Activated CD8-positive, alpha-beta T cell treated with anti-CD3 and anti-CD28 coated beads, Interleukin-2, amount 10 ng/mL, durations not matched to agents 7 days and 5 days (primary cell): ENCODE measurements at regions of chr10 and their contacts with region 1.

Region 1: DNA sequence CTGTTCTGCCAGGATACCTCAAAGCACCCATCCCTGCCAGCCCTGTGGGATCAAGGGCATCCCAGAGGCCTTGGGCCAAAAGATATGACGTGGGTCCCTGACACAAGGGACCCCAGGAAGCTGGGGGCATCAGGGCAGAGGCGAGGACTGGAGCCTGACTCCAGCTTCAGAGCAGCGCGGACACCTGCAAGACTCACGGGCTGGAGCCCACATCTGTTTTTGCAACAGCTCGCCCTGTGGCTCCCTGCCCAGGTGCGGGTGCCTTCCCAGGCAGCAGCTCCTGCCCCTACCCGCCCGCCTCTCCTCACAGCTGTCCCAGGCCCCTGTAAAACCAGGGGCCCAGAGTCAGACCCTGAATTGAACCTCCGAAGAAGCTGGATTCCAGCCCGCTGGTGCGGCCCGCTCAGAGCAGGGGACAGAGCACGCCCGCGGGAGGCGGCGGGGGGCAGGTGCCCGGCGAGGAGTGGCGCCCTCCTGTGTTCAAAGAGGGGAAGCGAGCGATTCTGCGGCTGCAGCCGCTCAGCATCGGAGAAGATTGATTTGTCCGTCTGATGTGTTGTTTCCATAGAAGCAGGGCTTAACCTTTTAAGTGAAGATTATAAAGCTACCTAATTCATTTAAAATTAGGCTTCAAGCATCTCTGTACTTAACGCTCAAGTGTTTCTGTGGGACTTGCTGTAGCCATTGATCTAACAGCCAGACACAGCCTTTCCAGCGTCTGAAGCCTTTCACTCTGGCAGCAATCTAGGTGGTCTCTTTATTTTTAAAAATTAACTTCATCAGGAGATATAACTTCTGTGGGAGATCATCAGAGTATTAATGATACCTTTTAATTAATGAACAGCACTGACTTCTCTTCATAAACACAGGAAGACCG is 88.4 kb downstream of the BEND7 start:
- DNase-seq: peak; percentile 70
- ATAC-seq: peak; percentile 95
- H3K4me3 Mint-ChIP-seq: peak overlapping the region; percentile 20
- H3K27ac Mint-ChIP-seq: no peak overlapping the region
- H3K4me1 Mint-ChIP-seq: peaks cover 9% of the 10 kb centered on the region
- H3K27me3 Mint-ChIP-seq: peaks cover 35% of the 10 kb centered on the region

Region 2: DNA sequence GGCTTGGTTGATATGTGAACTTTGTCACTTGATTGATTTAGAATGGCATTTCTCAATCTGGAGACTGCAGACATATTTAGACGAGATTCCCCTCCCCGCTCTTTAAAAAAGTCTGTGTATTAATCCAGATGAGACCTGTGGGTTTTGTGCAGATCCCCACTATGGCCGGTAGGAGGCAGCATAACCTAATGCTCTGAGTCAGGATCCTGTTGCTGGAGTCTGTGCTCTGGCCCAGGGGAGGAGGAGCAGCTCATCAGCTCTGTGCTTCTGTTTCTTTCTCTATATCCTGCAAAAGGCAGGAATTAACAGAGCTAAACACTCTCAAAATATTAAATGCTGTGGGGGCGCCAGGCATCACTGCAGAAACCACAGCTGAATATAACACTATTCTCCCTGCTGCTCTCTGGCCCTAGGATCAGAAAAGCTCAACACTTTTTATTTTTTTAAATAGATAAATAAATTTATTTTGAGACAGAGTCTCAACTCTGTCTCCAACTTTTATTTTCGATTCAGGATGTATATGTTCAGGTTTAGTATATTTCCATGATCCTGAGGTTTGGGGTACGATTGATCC is 68.4 kb before region 1 on chr10:
- CTCF ChIA-PET with region 1: interaction called, 66 read pairs
- POLR2A ChIA-PET with region 1: no interaction called
- DNase-seq: peak; percentile 79
- ATAC-seq: peak; percentile 98
- H3K4me3 Mint-ChIP-seq: no peak overlapping the region
- H3K27ac Mint-ChIP-seq: no peak overlapping the region
- H3K4me1 Mint-ChIP-seq: peaks cover 2% of the 10 kb centered on the region
- H3K27me3 Mint-ChIP-seq: peaks cover 6% of the 10 kb centered on the region

Region 3: GRCh38 chr10:13404305-13404759 is 36.1 kb before region 1 on chr10:
- CTCF ChIA-PET with region 1: no interaction called
- POLR2A ChIA-PET with region 1: no interaction called
- DNase-seq: no peak
- ATAC-seq: no peak
- H3K4me3 Mint-ChIP-seq: no peak overlapping the region
- H3K27ac Mint-ChIP-seq: no peak overlapping the region
- H3K4me1 Mint-ChIP-seq: no peaks in the 10 kb centered on the region
- H3K27me3 Mint-ChIP-seq: peaks cover 4% of the 10 kb centered on the region

Region 4: GRCh38 chr10:13422566-13423199 is 17.7 kb before region 1 on chr10:
- CTCF ChIA-PET with region 1: interaction called, 12 read pairs
- POLR2A ChIA-PET with region 1: interaction called, 3 read pairs
- DNase-seq: no peak
- ATAC-seq: no peak
- H3K4me3 Mint-ChIP-seq: no peak overlapping the region
- H3K27ac Mint-ChIP-seq: no peak overlapping the region
- H3K4me1 Mint-ChIP-seq: no peaks in the 10 kb centered on the region
- H3K27me3 Mint-ChIP-seq: peaks cover 14% of the 10 kb centered on the region

Region 5: DNA sequence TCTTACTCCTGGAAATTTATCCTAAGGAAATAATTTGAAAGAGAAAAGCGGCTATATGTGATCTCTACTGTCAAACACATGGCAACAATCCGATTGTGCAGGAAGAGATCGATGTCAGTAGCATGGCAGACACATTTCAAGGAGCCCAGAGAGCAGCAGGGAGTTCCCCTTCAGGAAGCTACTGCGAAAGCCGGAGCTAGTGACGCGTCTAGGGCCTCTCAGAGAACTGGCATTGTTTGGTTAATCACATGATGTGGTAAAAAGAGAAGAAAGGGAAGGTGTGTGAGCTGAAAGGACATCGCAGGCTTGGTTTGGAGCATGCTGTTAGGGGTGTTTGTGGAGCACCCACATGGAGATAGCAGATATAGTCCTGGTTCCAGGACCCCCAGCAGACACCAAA is 13.5 kb after region 1 on chr10:
- CTCF ChIA-PET with region 1: interaction called, 18 read pairs
- POLR2A ChIA-PET with region 1: no interaction called
- DNase-seq: peak; percentile 35
- ATAC-seq: peak; percentile 27
- H3K4me3 Mint-ChIP-seq: no peak overlapping the region
- H3K27ac Mint-ChIP-seq: no peak overlapping the region
- H3K4me1 Mint-ChIP-seq: peaks cover 6% of the 10 kb centered on the region
- H3K27me3 Mint-ChIP-seq: peaks cover 16% of the 10 kb centered on the region